PC-9 (cell line): ENCODE measurements at regions of chr3 and their contacts with region 1.

Region 1: GRCh38 chr3:189340672-189341460 is 169.1 kb downstream of the TPRG1 start:
- DNase-seq: peak in 1 of 2 experiments; percentile 29
- H3K4me3 ChIP-seq: no peak overlapping the region
- H3K27ac ChIP-seq: no peak overlapping the region
- H3K4me1 ChIP-seq: peaks cover 17% of the 10 kb centered on the region
- H3K27me3 ChIP-seq: no peaks in the 10 kb centered on the region
- CTCF ChIP-seq: no peak; the same call in 1 of the 2 replicates

Region 2: DNA sequence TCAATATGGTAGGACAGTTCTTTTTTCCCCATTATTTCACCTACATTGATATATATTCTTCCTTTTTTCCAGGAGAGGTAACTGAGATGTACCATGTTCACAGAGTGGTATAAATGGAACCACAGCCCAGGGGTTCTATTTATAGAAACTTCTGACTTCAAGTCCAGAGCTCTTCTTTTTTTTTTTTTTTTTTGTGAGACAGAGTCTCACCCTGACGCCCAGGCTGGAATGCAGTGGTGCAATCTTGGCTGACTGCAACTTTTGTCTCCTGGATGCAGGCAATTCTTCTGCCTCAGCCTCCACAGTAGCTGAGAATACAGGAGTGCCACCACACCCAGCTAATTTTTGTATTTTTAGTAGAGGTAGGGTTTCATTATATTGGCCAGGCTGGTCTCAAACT is 436.2 kb before region 1 on chr3:
- CTCF ChIA-PET with region 1: no interaction called
- POLR2A ChIA-PET with region 1: no interaction called
- intact Hi-C with region 1: no loop called
- DNase-seq: peak in 1 of 2 experiments; percentile 24
- H3K4me3 ChIP-seq: no peak overlapping the region
- H3K27ac ChIP-seq: no peak overlapping the region
- H3K4me1 ChIP-seq: peaks cover 12% of the 10 kb centered on the region; the same call in 1 of the 2 replicates
- H3K27me3 ChIP-seq: no peaks in the 10 kb centered on the region
- CTCF ChIP-seq: no peak

Region 3: DNA sequence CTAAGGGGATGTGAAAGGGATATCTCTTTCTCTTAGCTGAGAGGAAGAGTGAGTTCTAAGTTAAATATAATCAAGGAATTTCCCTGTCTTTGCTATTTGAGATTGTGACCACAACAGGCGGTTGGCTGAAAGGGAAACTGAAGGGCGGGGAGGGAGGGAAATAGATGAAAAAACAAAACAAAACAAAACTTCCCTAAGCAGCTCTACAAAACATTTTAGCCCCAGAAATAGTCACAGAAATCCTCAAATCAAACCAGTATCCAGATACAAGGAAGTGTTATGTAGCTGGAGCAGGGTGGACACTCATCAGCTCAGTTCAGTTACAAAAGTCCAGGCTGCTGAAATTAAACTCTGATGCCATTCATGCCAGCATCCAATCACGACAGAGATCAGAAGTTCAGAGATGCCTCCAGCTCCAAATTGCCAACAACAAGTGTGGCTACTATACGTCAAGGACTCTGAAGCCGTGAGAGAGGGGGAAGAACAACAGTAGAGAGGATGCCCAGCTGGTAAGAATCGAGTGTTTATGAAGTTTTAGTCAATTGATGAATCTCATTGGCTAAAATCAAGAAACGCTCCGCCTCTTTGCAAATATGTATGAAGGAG is 290.0 kb after region 1 on chr3:
- CTCF ChIA-PET with region 1: no interaction called
- POLR2A ChIA-PET with region 1: no interaction called
- intact Hi-C with region 1: no loop called
- DNase-seq: no peak
- H3K4me3 ChIP-seq: no peak overlapping the region
- H3K27ac ChIP-seq: no peak overlapping the region
- H3K4me1 ChIP-seq: no peaks in the 10 kb centered on the region
- H3K27me3 ChIP-seq: no peaks in the 10 kb centered on the region
- CTCF ChIP-seq: no peak

Region 4: DNA sequence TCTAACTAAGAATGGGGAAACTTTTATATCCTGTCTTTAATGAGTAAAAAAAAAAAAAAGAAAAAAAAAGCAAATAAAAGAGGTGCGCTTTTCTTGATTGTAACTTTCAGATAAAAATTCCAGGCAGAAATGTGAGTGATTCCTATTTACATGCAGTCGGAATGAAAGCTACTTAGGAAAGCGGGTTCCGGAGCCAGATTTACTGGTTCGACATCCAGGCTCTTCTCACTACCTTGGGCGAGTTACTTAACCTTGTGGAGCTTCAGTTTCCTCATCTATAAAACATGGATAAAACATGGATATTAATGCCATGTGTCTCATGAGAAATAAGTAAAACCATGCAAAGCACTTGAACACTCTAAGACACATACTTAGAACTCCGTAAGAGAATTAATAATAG is 459.6 kb after region 1 on chr3:
- CTCF ChIA-PET with region 1: no interaction called
- POLR2A ChIA-PET with region 1: interaction called, 23 read pairs
- intact Hi-C with region 1: no loop called
- DNase-seq: no peak
- H3K4me3 ChIP-seq: no peak overlapping the region
- H3K27ac ChIP-seq: no peak overlapping the region
- H3K4me1 ChIP-seq: peaks cover 14% of the 10 kb centered on the region
- H3K27me3 ChIP-seq: no peaks in the 10 kb centered on the region
- CTCF ChIP-seq: no peak